Activated CD4-positive, alpha-beta T cell treated with anti-CD3 and anti-CD28 coated beads for 36 hours (primary cell): ENCODE measurements at regions of chr12 and their contacts with region 1.

Region 1: GRCh38 chr12:122871851-122872780 is 23.8 kb downstream of the VPS37B start:
- DNase-seq: peak; percentile 84
- ATAC-seq: peak; percentile 61
- H3K4me3 Mint-ChIP-seq: peak overlapping the region; percentile 49
- H3K27ac Mint-ChIP-seq: peak overlapping the region; percentile 69
- H3K4me1 Mint-ChIP-seq: peaks cover 60% of the 10 kb centered on the region
- H3K27me3 Mint-ChIP-seq: peaks cover 26% of the 10 kb centered on the region

Region 2: DNA sequence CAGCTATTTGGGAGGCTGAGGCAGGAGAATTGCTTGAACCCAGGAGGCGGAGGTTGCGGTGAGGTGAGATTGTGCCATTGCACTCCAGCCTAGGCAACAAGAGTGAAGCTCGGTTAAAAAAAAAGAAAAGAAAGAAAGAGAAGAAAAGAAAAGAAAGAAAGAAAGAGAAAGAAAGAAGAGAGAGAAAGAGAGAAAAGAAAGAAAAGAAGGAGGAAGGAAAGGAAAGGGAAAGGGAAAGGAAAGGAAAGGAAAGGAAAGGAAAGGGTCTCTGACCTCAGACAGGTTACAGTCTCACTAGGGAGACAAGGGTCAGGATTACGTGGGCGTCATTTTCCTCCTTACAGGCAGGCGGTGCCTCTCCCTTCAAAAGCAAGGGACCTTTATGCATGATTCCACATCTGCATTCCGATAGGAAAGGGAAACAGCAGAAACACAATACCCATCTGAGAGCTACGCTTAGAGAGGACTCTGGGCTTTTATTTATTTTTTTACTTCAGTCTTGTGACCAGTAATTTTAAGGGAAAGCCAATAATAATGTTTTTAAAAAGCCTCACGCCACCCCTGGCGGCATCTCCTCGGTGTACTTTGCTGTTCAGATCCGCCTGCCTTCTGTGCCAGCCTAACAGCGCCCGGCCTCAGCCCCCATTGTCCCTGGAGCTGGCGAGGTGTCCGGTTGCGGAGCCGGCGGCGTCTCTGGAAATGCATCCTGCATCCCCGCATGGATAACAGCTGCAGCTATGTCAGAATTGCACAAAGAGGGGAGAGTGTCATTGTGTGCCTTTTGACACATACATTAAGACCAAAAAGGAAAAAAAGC is 37.8 kb before region 1 on chr12:
- CTCF ChIA-PET with region 1: no interaction called
- POLR2A ChIA-PET with region 1: no interaction called
- intact Hi-C with region 1: loop called in 1 of 2 experiments (anchors 1 kb)
- DNase-seq: peak; percentile 48
- ATAC-seq: peak; percentile 8
- H3K4me3 Mint-ChIP-seq: peak overlapping the region; percentile 75
- H3K27ac Mint-ChIP-seq: peak overlapping the region; percentile 74
- H3K4me1 Mint-ChIP-seq: peaks cover 31% of the 10 kb centered on the region
- H3K27me3 Mint-ChIP-seq: peaks cover 3% of the 10 kb centered on the region

Region 3: DNA sequence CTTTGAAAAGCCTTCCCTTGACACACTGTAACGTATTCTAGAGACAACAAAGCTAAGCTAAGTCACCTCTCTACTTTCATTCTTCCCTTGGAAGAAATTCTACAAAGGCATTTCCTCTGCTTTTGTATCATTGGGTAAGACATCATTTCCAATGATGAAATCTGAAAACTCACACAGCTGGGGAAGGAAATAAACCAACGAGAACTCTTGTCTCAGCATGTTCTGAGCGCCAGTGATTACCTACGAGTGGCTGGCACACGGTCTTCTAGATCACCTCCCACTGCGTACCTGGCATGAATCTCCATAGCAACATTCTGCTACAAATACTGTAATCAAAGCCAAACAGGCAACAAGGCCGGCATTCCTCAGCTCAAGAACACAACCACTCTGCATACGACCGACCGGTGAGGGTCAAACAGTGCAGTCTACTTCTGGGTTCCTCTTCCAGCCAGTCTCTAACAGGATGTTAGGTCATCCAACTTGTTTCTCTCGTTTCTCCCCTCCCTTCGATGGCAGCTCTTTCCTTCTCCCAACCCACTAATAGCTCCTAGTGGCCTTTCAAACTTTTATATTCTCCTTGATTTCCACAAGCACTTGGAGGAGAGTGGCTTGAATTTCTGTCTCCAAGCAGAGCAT is 16.2 kb after region 1 on chr12:
- CTCF ChIA-PET with region 1: interaction called, 3 read pairs
- POLR2A ChIA-PET with region 1: interaction called, 4 read pairs
- intact Hi-C with region 1: loop called (anchors 1 kb)
- DNase-seq: peak; percentile 67
- ATAC-seq: peak; percentile 78
- H3K4me3 Mint-ChIP-seq: peak overlapping the region; percentile 66
- H3K27ac Mint-ChIP-seq: peak overlapping the region; percentile 90
- H3K4me1 Mint-ChIP-seq: peaks cover 78% of the 10 kb centered on the region
- H3K27me3 Mint-ChIP-seq: peaks cover 8% of the 10 kb centered on the region

Region 4: GRCh38 chr12:122895705-122896636 is 23.9 kb after region 1 on chr12 and contains the start of gene VPS37B:
- CTCF ChIA-PET with region 1: interaction called, 4 read pairs
- POLR2A ChIA-PET with region 1: interaction called, 3 read pairs
- intact Hi-C with region 1: loop called in 1 of 2 experiments (anchors 1 kb)
- DNase-seq: peak; percentile 93
- ATAC-seq: peak; percentile 67
- H3K4me3 Mint-ChIP-seq: peak within 1 kb of the TSS; percentile 86
- H3K27ac Mint-ChIP-seq: peak within 1 kb of the TSS; percentile 87
- H3K4me1 Mint-ChIP-seq: peaks cover 87% of the 10 kb centered on the region
- H3K27me3 Mint-ChIP-seq: peaks cover 7% of the 10 kb centered on the region
- total RNA-seq, gene VPS37B: 9.4 to 11.4 TPM

Region 5: GRCh38 chr12:122946690-122947341 is 74.7 kb after region 1 on chr12:
- CTCF ChIA-PET with region 1: interaction called, 10 read pairs
- POLR2A ChIA-PET with region 1: no interaction called
- intact Hi-C with region 1: loop called (anchors 1 to 2 kb)
- DNase-seq: peak; percentile 94
- ATAC-seq: peak; percentile 98
- H3K4me3 Mint-ChIP-seq: no peak overlapping the region
- H3K27ac Mint-ChIP-seq: peak overlapping the region; percentile 40
- H3K4me1 Mint-ChIP-seq: peaks cover 20% of the 10 kb centered on the region
- H3K27me3 Mint-ChIP-seq: no peaks in the 10 kb centered on the region

Region 6: GRCh38 chr12:122951979-122952892 is 80.1 kb after region 1 on chr12:
- CTCF ChIA-PET with region 1: interaction called, 10 read pairs
- POLR2A ChIA-PET with region 1: interaction called, 3 read pairs
- intact Hi-C with region 1: loop called (anchors 1 to 2 kb)
- DNase-seq: peak; percentile 85
- ATAC-seq: peak; percentile 97
- H3K4me3 Mint-ChIP-seq: no peak overlapping the region
- H3K27ac Mint-ChIP-seq: no peak overlapping the region
- H3K4me1 Mint-ChIP-seq: peaks cover 4% of the 10 kb centered on the region
- H3K27me3 Mint-ChIP-seq: no peaks in the 10 kb centered on the region

Region 7: GRCh38 chr12:122965851-122966722 is 94.0 kb after region 1 on chr12 and contains the start of gene ABCB9:
- CTCF ChIA-PET with region 1: no interaction called
- POLR2A ChIA-PET with region 1: no interaction called
- intact Hi-C with region 1: no loop called
- DNase-seq: peak; percentile 99
- ATAC-seq: peak; percentile 99
- H3K4me3 Mint-ChIP-seq: peak within 1 kb of the TSS; percentile 63
- H3K27ac Mint-ChIP-seq: peak within 1 kb of the TSS; percentile 42
- H3K4me1 Mint-ChIP-seq: peaks cover 2% of the 10 kb centered on the region
- H3K27me3 Mint-ChIP-seq: no peaks in the 10 kb centered on the region
- total RNA-seq, gene ABCB9: 3.8 to 6.3 TPM